Activated CD4-positive, alpha-beta memory T cell treated with anti-CD3 and anti-CD28 coated beads for 36 hours (primary cell): ENCODE measurements at regions of chr6 and their contacts with region 1.

Region 1: GRCh38 chr6:167047554-167047953 is 48.4 kb downstream of the CEP43 start:
- DNase-seq: peak; percentile 88
- H3K4me3 Mint-ChIP-seq: peak overlapping the region; percentile 60
- H3K27ac Mint-ChIP-seq: peak overlapping the region; percentile 76
- H3K4me1 Mint-ChIP-seq: peaks cover 48% of the 10 kb centered on the region
- H3K27me3 Mint-ChIP-seq: no peaks in the 10 kb centered on the region

Region 2: GRCh38 chr6:166097915-166098522 is 949.5 kb before region 1 on chr6:
- CTCF ChIA-PET with region 1: no interaction called
- POLR2A ChIA-PET with region 1: no interaction called
- intact Hi-C with region 1: no loop called
- DNase-seq: peak; percentile 65
- H3K4me3 Mint-ChIP-seq: no peak overlapping the region
- H3K27ac Mint-ChIP-seq: no peak overlapping the region
- H3K4me1 Mint-ChIP-seq: peaks cover 3% of the 10 kb centered on the region
- H3K27me3 Mint-ChIP-seq: peaks cover 25% of the 10 kb centered on the region

Region 3: DNA sequence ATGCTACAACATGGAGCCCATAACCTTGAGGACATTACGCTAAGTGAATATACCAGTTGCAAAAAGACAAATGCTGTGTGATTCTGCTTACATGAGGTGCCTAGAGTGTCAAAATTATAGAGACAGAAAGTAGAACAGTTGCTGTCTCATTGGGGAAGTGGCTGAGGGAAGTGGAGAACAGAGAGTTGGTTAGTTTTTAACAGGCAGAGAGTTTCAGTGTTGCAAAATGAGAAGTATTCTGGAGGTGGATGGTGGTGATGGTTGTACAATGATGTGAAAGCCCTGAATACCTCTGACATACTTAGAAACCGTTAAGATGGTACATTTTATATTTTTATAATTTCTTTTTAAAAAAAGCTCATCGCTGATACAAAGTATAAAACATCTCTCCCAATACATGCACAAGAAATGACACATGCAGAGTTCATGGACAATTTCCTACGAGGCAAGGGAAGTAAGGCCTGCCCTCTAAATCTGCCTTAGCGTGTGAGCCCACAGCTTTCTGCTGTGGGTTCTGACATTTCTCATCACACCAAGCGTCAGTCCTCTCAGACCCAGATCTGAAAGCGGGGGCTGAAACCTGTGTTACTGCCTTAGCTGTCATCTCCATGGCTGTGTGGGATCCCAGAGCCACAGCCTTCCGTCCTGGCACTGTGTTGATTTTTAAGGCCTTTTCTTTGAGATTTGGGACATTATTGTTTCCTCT is 217.2 kb before region 1 on chr6:
- CTCF ChIA-PET with region 1: no interaction called
- POLR2A ChIA-PET with region 1: no interaction called
- intact Hi-C with region 1: loop called (anchors 1 kb)
- DNase-seq: peak; percentile 68
- H3K4me3 Mint-ChIP-seq: no peak overlapping the region
- H3K27ac Mint-ChIP-seq: peak overlapping the region; percentile 58
- H3K4me1 Mint-ChIP-seq: peaks cover 17% of the 10 kb centered on the region
- H3K27me3 Mint-ChIP-seq: no peaks in the 10 kb centered on the region

Region 4: GRCh38 chr6:167079853-167080297 is 32.3 kb after region 1 on chr6:
- CTCF ChIA-PET with region 1: no interaction called
- POLR2A ChIA-PET with region 1: interaction called, 6 read pairs
- intact Hi-C with region 1: loop called (anchors 1 kb)
- DNase-seq: peak; percentile 89
- H3K4me3 Mint-ChIP-seq: peak overlapping the region; percentile 6
- H3K27ac Mint-ChIP-seq: peak overlapping the region; percentile 54
- H3K4me1 Mint-ChIP-seq: peaks cover 28% of the 10 kb centered on the region
- H3K27me3 Mint-ChIP-seq: peaks cover 1% of the 10 kb centered on the region

Region 5: GRCh38 chr6:167113935-167114910 is 66.7 kb after region 1 on chr6:
- CTCF ChIA-PET with region 1: interaction called, 6 read pairs
- POLR2A ChIA-PET with region 1: interaction called, 10 read pairs
- intact Hi-C with region 1: loop called (anchors 1 kb)
- DNase-seq: peak; percentile 90
- H3K4me3 Mint-ChIP-seq: peak overlapping the region; percentile 76
- H3K27ac Mint-ChIP-seq: peak overlapping the region; percentile 94
- H3K4me1 Mint-ChIP-seq: peaks cover 83% of the 10 kb centered on the region
- H3K27me3 Mint-ChIP-seq: no peaks in the 10 kb centered on the region

Region 6: GRCh38 chr6:167153521-167153959 is 106.0 kb after region 1 on chr6:
- CTCF ChIA-PET with region 1: interaction called, 4 read pairs
- POLR2A ChIA-PET with region 1: no interaction called
- intact Hi-C with region 1: loop called (anchors 2 kb)
- DNase-seq: peak; percentile 43
- H3K4me3 Mint-ChIP-seq: peak overlapping the region; percentile 8
- H3K27ac Mint-ChIP-seq: no peak overlapping the region
- H3K4me1 Mint-ChIP-seq: peaks cover 24% of the 10 kb centered on the region
- H3K27me3 Mint-ChIP-seq: peaks cover 2% of the 10 kb centered on the region